ENCODE measurements at regions of chr22 and their contacts with region 1.

Region 1: DNA sequence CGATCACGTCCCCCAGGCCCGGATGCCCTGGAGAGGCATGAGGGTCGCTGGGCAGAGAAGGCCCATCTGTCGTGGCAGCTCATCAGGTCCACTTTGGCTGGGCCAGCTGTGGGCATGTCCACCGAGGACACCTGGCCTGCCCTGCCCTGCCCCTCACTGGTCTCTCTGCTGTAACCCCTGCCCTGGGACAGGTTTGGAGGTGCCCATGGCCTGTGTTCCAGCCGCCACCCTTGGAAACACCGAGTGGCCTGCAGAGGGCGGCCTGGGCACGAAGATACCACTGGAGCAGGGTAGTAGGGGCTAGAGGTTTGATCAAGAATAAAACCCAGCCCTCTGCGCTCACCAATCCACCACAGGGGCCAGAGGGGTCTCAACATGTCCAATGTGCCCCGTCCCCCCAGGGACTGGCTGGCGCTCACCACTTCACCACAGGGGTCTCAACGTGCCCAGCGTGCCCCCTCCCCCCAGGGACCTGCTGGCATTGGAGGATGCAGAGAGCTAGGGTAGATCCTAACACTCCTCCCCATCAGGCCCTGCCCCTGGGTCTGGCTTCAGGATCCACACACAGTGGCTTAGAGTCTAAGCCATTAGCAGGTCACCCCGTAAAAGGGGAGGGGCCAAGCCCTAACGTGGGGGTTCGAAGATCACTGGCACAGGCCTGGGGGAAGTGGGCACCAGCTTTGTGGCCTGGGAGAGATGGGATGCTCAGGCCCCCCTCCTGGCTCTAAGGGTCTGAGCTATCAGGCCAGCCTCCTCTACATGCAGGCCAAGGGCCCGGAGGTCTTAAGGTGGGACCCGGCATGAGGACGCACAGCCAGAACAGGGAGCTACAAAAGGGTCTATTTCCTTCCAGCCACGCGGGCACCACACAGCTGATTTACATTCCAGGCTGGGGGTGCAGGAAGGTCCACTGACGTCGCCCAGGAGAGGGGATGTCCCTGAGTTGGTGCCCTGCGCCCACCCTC is 1.3 kb upstream of the HDAC10 start:
- DNase-seq: peak; percentile 87
- H3K4me3 Mint-ChIP-seq: peak overlapping the region; percentile 70
- H3K27ac Mint-ChIP-seq: no peak overlapping the region
- H3K4me1 Mint-ChIP-seq: no peaks in the 10 kb centered on the region
- H3K27me3 Mint-ChIP-seq: no peaks in the 10 kb centered on the region
- CTCF ChIP-seq: peak; percentile 78

Region 2: DNA sequence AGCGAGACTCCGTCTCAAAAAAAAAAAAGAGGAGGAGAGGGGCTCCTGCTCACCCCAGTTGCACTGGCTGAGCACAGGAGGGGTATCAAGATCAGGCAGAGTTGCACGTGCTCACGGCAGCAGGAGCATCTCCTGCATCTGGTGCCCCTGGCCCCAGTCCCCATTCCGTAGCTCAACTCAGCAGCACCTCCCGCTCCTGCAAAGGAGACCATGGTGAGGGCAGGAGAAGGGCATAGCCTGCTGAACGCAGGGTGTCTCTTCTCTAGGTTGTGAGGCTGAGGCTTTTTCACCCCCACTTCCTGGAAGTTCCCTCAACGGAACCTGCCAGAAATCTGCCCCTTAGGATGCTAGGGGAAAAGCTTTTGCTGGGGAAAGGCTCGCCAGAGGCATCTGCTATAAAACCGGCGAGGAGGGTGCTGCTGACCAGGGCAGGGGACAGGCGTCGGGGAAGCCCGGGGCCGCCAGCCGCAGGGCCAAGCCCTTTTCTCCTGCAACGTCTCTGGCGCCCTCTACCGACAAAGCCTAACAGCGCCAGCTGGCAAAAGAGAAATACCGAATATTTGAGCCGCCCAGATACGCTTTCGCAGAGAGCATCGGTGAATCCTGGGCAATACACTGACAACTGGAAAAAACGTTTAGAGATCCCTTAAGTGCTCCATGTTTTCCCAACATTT is 89.8 kb after region 1 on chr22:
- CTCF ChIA-PET with region 1: interaction called, 7 read pairs
- intact Hi-C with region 1: loop called (anchors 2 kb)
- DNase-seq: peak; percentile 94
- H3K4me3 Mint-ChIP-seq: peak overlapping the region; percentile 56
- H3K27ac Mint-ChIP-seq: no peak overlapping the region
- H3K4me1 Mint-ChIP-seq: no peaks in the 10 kb centered on the region
- H3K27me3 Mint-ChIP-seq: no peaks in the 10 kb centered on the region
- CTCF ChIP-seq: peak; percentile 88

Region 3: GRCh38 chr22:50361688-50362087 is 109.3 kb after region 1 on chr22:
- CTCF ChIA-PET with region 1: no interaction called
- intact Hi-C with region 1: no loop called
- DNase-seq: no peak
- H3K4me3 Mint-ChIP-seq: no peak overlapping the region
- H3K27ac Mint-ChIP-seq: no peak overlapping the region
- H3K4me1 Mint-ChIP-seq: no peaks in the 10 kb centered on the region
- H3K27me3 Mint-ChIP-seq: no peaks in the 10 kb centered on the region
- CTCF ChIP-seq: no peak